Activated T-helper 2 cell treated with anti-CD3 and anti-CD28 coated beads, Interferon-gamma antibody, Interleukin-2, Interleukin-4, amounts not matched to agents 10 μg/mL and 5 μg/mL and 100 μg/mL, durations not matched to agents 14 hours and 24 hours and 36 hours (primary cell): ENCODE measurements at regions of chr18 and their contacts with region 1.

Region 1: GRCh38 chr18:55251254-55251971 is 292.2 kb upstream of the CCDC68 start:
- DNase-seq: no peak
- H3K4me3 Mint-ChIP-seq: no peak overlapping the region
- H3K27ac Mint-ChIP-seq: no peak overlapping the region
- H3K4me1 Mint-ChIP-seq: peaks cover 45% of the 10 kb centered on the region
- H3K27me3 Mint-ChIP-seq: no peaks in the 10 kb centered on the region

Region 2: DNA sequence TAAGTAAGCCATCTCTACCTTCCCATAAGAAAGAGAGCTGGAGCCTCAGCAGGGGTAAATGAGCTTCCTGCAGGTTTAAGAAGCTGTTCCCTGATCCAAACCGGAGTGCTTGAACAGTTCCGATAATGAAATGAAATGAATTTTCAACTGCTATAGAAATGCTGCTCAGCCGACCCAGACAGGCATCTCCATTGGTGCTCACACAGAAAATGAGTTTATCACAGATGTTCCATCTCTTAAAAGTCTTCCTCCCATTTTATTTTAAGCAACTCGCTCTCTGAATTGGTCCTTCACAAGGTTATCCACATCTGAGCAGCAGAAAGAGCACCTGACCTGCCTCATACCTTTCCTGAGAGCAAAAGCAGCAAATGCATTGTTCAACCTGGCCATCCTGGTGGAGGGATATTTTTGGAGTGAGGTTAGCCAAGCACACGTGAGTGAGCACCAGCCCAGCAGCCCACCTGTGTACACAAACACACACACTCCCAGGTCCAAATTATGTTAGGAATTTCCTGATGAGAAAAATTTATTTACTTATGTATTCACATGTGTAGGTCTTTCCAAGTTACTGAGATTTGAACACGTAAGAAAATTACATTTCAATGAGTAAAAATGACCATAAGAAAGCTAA is 249.9 kb before region 1 on chr18:
- intact Hi-C with region 1: no loop called
- DNase-seq: no peak
- H3K4me3 Mint-ChIP-seq: no peak overlapping the region
- H3K27ac Mint-ChIP-seq: no peak overlapping the region
- H3K4me1 Mint-ChIP-seq: no peaks in the 10 kb centered on the region
- H3K27me3 Mint-ChIP-seq: no peaks in the 10 kb centered on the region

Region 3: GRCh38 chr18:55069497-55069896 is 181.9 kb before region 1 on chr18:
- intact Hi-C with region 1: no loop called
- DNase-seq: no peak
- H3K4me3 Mint-ChIP-seq: no peak overlapping the region
- H3K27ac Mint-ChIP-seq: no peak overlapping the region
- H3K4me1 Mint-ChIP-seq: no peaks in the 10 kb centered on the region
- H3K27me3 Mint-ChIP-seq: no peaks in the 10 kb centered on the region

Region 4: GRCh38 chr18:55268151-55268601 is 16.8 kb after region 1 on chr18:
- intact Hi-C with region 1: loop called (anchors 1 kb)
- DNase-seq: no peak
- H3K4me3 Mint-ChIP-seq: no peak overlapping the region
- H3K27ac Mint-ChIP-seq: peak overlapping the region; percentile 79
- H3K4me1 Mint-ChIP-seq: peaks cover 23% of the 10 kb centered on the region
- H3K27me3 Mint-ChIP-seq: no peaks in the 10 kb centered on the region

Region 5: GRCh38 chr18:55351980-55352714 is 100.7 kb after region 1 on chr18:
- intact Hi-C with region 1: loop called (anchors 1 kb)
- DNase-seq: no peak
- H3K4me3 Mint-ChIP-seq: no peak overlapping the region
- H3K27ac Mint-ChIP-seq: no peak overlapping the region
- H3K4me1 Mint-ChIP-seq: peaks cover 10% of the 10 kb centered on the region
- H3K27me3 Mint-ChIP-seq: peaks cover 4% of the 10 kb centered on the region

Region 6: GRCh38 chr18:55489034-55489986 is 237.9 kb after region 1 on chr18:
- intact Hi-C with region 1: loop called (anchors 5 kb)
- DNase-seq: no peak
- H3K4me3 Mint-ChIP-seq: peak overlapping the region; percentile 43
- H3K27ac Mint-ChIP-seq: peak overlapping the region; percentile 85
- H3K4me1 Mint-ChIP-seq: peaks cover 20% of the 10 kb centered on the region
- H3K27me3 Mint-ChIP-seq: peaks cover 28% of the 10 kb centered on the region

Region 7: GRCh38 chr18:55694291-55694690 is 442.9 kb after region 1 on chr18:
- intact Hi-C with region 1: no loop called
- DNase-seq: no peak
- H3K4me3 Mint-ChIP-seq: no peak overlapping the region
- H3K27ac Mint-ChIP-seq: no peak overlapping the region
- H3K4me1 Mint-ChIP-seq: no peaks in the 10 kb centered on the region
- H3K27me3 Mint-ChIP-seq: no peaks in the 10 kb centered on the region